Activated CD4-positive, alpha-beta memory T cell treated with anti-CD3 and anti-CD28 coated beads for 36 hours (primary cell): ENCODE measurements at regions of chr15 and their contacts with region 1.

Region 1: GRCh38 chr15:48861813-48862431 is 16.0 kb upstream of the EID1 start:
- DNase-seq: peak; percentile 32
- H3K4me3 Mint-ChIP-seq: no peak overlapping the region
- H3K27ac Mint-ChIP-seq: no peak overlapping the region
- H3K4me1 Mint-ChIP-seq: peaks cover 6% of the 10 kb centered on the region
- H3K27me3 Mint-ChIP-seq: peaks cover 4% of the 10 kb centered on the region

Region 2: DNA sequence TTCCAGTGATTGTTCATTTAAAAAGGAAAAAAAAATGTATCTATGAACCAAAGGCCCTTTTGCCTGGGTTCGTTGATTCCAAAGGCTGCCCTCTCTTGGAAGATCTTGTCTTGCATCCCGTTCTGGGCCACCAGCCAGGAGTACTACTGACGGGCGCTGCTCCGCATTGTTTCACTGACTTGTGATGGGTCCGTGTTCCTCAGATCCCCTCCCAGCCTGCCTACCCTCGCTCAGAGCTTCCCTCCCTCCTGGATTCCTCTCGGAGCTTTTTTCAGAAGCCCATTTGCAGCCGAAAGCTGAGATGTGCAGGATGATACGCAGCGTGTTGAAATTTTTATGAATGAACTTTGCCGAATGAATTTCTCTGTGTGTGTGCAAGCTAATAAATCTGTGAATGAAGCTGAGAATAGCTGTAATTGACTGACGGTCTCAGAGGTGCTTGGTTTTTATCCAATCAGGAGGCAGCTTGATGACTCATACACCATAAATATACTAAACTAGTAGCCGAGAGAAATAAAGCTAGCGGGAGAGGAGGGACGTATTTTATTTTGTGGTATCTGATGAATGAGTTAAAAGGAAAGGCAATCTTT is 101.7 kb after region 1 on chr15 and contains the start of gene SHC4:
- CTCF ChIA-PET with region 1: interaction called, 45 read pairs
- POLR2A ChIA-PET with region 1: no interaction called
- intact Hi-C with region 1: loop called (anchors 1 kb)
- DNase-seq: no peak
- H3K4me3 Mint-ChIP-seq: peak within 1 kb of the TSS; percentile 61
- H3K27ac Mint-ChIP-seq: no peak within 1 kb of the TSS
- H3K4me1 Mint-ChIP-seq: peaks cover 32% of the 10 kb centered on the region
- H3K27me3 Mint-ChIP-seq: peaks cover 25% of the 10 kb centered on the region
- total RNA-seq, gene SHC4: 1.9 to 2.6 TPM

Region 3: DNA sequence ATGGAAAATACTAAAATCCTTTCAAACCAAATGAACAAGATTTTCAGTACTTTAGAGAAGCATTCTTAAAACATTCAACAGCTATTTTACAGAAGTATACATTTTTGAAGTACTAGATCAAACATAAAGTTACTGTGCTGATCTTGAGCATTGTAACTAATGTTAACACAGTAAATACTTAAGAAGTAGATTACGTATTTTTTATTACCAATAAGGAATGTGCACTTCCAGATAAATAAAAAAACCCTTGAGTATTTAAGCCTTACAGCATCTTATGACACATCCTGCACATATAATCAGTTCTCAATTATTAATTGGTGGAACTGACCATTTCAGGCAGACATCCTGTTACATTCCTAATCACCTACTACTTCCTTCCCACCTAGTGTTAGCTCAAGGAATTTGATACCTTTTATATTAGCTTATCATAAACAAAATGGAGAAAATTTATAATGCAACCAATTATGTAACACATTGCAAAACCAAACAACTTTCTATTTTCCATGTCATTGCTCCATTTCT is 260.7 kb after region 1 on chr15:
- CTCF ChIA-PET with region 1: interaction called, 12 read pairs
- POLR2A ChIA-PET with region 1: no interaction called
- intact Hi-C with region 1: no loop called
- DNase-seq: no peak
- H3K4me3 Mint-ChIP-seq: no peak overlapping the region
- H3K27ac Mint-ChIP-seq: no peak overlapping the region
- H3K4me1 Mint-ChIP-seq: no peaks in the 10 kb centered on the region
- H3K27me3 Mint-ChIP-seq: no peaks in the 10 kb centered on the region

Region 4: DNA sequence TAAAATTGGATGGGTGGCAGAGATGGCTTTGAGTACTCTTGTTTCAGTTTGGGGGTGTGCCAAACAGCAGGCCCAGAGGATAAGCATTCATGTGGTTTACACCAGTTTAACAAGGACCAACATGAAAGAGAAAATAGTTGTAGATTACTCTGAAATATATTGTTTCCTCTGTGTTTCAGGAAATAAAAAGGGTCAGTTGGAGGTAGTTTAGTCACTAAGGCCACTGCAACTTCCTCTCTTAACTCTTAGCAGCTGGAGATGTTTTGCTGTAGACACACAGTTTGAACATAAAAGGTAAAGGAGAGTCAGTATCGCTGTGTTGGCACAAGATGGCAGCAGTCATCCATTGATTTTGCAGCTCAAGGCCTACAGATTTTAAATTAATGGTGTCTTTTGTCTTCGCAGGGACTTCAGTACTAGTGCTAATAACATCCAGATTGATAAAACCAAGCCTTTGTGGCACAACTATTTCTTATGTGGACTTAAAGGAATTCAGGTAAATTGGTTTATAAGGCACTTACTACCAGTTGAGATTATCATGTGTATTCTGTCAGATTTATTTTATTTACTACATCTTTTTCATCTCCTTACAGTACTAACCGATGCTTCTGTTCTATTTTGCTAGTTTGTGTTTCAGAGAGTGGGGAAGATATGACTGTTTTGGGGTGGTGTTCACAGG is 373.7 kb after region 1 on chr15:
- CTCF ChIA-PET with region 1: interaction called, 4 read pairs
- POLR2A ChIA-PET with region 1: no interaction called
- intact Hi-C with region 1: loop called (anchors 5 kb)
- DNase-seq: peak; percentile 57
- H3K4me3 Mint-ChIP-seq: no peak overlapping the region
- H3K27ac Mint-ChIP-seq: no peak overlapping the region
- H3K4me1 Mint-ChIP-seq: peaks cover 9% of the 10 kb centered on the region
- H3K27me3 Mint-ChIP-seq: no peaks in the 10 kb centered on the region

Region 5: GRCh38 chr15:50003786-50004334 is 1141.9 kb after region 1 on chr15:
- CTCF ChIA-PET with region 1: interaction called, 4 read pairs
- POLR2A ChIA-PET with region 1: no interaction called
- intact Hi-C with region 1: loop called (anchors 10 kb)
- DNase-seq: peak; percentile 77
- H3K4me3 Mint-ChIP-seq: no peak overlapping the region
- H3K27ac Mint-ChIP-seq: no peak overlapping the region
- H3K4me1 Mint-ChIP-seq: peaks cover 7% of the 10 kb centered on the region
- H3K27me3 Mint-ChIP-seq: peaks cover 2% of the 10 kb centered on the region